GM18951 (cell line): ENCODE measurements at regions of chr10 and their contacts with region 1.

Region 1: DNA sequence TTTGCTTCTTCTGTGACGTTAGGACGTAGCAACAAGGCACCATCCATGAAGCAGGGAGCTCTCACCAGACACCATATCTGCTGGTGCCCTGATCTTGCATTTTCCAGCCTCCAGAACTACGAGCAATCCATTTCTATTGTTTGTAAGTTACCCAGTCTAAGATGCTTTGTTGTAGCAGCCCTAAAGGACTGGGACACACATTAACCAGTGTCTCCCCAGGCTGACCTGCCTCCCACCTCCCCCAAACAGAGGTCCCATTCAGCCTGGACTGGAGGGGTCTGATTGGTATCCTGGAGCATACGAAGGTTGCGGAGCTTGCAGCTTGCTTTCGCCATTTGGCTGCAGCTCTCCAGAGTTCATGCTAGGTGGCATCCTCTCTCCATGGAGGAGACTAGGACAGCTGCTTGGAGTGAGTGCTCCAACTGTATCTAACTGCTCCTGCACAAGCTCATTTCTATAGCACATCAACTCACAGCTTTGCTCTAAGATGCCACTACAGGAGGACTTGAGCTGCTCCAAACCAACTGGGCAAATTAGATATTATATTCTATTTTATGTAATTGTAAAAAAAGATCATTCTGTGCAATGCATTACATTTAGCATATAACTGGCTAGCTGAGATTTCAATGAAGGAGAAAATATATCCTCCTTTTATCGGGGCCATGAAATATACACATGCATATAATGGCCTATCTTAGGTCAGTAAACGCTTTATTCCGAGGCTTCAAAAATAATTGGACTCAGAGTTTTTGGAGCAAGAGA is 8.0 kb upstream of the GRK5 start:
- POLR2A ChIP-seq: no peak

Region 2: DNA sequence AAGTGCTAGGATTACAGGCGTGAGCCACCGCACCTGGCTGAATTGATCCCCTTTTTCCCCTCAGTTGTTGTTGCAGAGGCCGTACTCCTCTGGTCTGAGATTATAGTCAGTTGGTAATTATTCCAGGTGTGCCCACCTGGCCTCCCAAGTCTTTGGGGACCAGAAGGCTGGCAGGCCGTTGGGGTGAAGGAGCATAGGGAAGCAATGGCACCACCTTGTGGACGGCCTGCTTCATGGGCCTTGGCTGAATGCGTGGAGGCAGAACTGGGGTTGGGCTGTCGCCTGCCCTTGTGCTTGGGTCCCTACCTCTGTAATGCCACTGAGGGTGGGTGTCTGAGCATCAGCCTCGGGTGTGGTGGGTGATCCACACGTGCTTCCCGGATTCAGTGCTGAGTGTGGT is 217.4 kb after region 1 on chr10:
- in situ Hi-C with region 1: loop called (anchors 10 kb)
- POLR2A ChIP-seq: no peak